ENCODE measurements at regions of chr1 and their contacts with region 1.

Region 1: DNA sequence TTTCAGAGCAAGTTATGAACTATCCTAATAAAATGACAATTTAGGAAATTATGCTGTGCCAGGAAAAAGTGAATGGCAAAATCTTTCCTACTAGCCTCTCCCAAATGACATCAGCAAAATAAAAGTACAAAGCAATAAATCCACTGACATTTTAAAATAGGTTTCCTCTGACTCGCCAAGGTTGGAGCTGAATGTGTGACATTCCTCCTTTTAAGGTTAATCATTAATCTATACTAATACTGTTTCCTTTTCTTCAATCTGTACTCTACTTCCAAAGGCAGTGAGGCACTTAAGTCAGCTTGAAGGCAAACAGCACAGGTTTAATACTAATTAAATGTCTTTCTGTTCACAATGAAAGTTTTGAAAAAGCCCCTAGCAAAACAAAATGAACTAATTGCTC is 15.7 kb downstream of the RNF19B start:
- DNase-seq: no peak
- ATAC-seq: no peak
- H3K4me3 ChIP-seq: no peak overlapping the region
- H3K27ac ChIP-seq: peak overlapping the region in 1 of 4 donors; percentile 4
- H3K4me1 ChIP-seq: peaks cover 16 to 18% of the 10 kb centered on the region in 2 donors
- H3K27me3 ChIP-seq: no peaks in the 10 kb centered on the region
- CTCF ChIP-seq: no peak
- POLR2A ChIP-seq: no peak

Region 2: DNA sequence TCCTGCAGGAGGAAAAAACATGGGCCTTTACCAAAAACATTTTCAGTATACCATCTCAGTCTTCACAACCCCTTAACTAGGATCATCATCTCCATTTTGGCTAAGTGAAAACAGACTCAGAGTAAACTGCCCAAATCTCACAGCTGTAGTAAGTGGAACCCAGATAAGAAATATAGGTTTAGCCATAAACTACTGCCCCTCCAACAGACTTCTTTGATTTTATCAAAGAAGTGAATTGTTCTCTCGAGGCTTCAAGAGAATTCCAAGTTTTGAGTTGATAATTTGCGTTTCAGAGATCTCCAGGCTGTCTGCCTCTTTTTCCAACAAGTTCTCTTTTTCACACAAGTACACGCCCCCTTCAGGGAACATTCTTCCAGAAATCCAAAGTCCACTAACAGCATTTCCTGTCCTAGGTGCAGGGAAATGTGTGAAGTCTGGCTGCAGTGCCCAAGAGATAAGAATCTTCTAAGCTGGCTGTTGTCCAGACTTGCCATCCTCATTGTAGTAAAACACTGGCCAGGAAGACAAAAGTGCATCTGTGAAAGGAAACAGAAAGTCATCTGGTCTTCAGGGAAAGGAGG is 15.1 kb before region 1 on chr1:
- in situ Hi-C with region 1: no loop called
- intact Hi-C with region 1: no loop called
- DNase-seq: no peak
- ATAC-seq: peak in 1 of 2 donors; percentile 49
- H3K4me3 ChIP-seq: no peak overlapping the region
- H3K27ac ChIP-seq: peak overlapping the region in 3 of 4 donors; percentile 26 to 59 (median 41)
- H3K4me1 ChIP-seq: no peaks in the 10 kb centered on the region
- H3K27me3 ChIP-seq: no peaks in the 10 kb centered on the region
- CTCF ChIP-seq: peak in 1 of 5 experiments; percentile 12
- POLR2A ChIP-seq: no peak

Region 3: DNA sequence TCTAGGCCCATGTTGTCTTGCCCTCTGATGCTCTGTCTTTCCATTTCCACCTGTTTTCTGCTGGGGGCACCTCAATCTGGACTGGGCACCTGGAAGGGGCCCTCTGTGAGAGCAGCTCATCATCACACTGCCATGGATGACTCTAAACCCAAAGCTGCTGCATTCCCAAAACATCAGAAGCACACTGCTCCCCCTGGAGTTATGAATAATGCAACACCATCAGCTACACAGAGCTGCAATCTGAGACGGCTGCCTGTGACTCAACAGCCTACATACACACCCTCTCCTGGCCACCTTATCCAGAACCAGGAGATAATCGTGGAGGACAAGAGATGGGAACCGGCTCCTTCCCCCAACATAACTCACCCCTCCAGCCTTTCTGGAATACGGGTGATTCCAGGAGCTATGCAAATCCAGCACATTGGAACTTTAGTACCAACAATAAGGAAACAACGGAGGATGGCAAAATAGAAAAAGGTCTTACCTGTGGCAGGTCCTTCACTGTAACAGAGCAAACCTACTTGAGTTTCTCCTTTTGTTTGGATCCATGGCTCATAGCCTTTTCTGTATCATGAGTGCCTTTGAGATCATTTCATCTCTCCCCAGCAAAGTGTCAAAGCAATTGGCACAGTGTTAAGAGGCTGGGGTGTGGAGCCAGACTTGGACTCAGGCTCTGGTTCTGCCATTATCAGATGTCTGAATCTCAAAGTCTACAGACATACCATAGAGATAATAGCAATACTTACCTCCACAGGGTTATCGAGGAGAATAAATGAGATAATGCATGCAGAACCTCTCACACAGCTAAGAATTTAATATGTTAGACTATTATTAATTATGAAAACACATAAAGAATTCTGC is 58.5 kb after region 1 on chr1:
- in situ Hi-C with region 1: no loop called
- intact Hi-C with region 1: loop called (anchors 5 kb)
- DNase-seq: peak; percentile 42 to 68
- ATAC-seq: peak; percentile 86 to 90
- H3K4me3 ChIP-seq: no peak overlapping the region
- H3K27ac ChIP-seq: peak overlapping the region in 2 of 4 donors; percentile 44 to 51
- H3K4me1 ChIP-seq: peaks cover 38 to 58% of the 10 kb centered on the region in 2 donors
- H3K27me3 ChIP-seq: no peaks in the 10 kb centered on the region
- CTCF ChIP-seq: peak in 4 of 5 experiments; percentile 35 to 52 (median 46)
- POLR2A ChIP-seq: peak in 1 of 2 donors; percentile 19